ENCODE measurements at regions of chr6 and their contacts with region 1.

Region 1: DNA sequence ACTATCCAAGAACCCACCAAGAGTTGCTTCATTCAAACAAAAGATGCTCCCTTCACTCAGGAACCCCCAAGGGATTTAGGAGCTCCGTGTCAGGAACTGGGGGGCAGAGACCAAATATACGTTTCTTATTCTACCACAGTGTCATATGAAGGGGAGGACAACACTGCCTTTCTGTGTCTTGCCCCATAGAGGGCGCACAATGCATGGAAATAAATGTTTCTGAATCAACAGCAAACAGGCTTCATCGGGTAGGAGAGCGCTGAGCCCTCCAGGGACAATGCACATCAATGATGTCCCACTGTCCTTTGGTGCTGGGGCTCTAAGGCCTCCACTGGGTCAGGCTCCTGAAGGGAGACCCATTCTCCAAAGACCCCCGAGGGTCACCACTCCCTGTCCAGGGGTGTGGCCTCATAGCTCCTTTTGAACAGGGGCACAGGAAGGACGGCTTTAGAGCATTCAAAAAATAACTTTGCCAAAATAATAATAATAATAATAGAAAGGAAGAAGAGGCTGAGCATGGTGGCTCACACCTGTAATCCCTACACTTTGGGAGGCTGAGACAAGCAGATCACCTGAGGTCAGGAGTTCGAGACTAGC is 31.1 kb downstream of the PLG start:
- DNase-seq: no peak
- ATAC-seq: peak; percentile 78
- H3K4me3 Mint-ChIP-seq: no peak overlapping the region
- H3K27ac Mint-ChIP-seq: no peak overlapping the region
- H3K4me1 Mint-ChIP-seq: no peaks in the 10 kb centered on the region
- H3K27me3 Mint-ChIP-seq: peaks cover 25% of the 10 kb centered on the region
- CTCF ChIP-seq: no peak

Region 2: DNA sequence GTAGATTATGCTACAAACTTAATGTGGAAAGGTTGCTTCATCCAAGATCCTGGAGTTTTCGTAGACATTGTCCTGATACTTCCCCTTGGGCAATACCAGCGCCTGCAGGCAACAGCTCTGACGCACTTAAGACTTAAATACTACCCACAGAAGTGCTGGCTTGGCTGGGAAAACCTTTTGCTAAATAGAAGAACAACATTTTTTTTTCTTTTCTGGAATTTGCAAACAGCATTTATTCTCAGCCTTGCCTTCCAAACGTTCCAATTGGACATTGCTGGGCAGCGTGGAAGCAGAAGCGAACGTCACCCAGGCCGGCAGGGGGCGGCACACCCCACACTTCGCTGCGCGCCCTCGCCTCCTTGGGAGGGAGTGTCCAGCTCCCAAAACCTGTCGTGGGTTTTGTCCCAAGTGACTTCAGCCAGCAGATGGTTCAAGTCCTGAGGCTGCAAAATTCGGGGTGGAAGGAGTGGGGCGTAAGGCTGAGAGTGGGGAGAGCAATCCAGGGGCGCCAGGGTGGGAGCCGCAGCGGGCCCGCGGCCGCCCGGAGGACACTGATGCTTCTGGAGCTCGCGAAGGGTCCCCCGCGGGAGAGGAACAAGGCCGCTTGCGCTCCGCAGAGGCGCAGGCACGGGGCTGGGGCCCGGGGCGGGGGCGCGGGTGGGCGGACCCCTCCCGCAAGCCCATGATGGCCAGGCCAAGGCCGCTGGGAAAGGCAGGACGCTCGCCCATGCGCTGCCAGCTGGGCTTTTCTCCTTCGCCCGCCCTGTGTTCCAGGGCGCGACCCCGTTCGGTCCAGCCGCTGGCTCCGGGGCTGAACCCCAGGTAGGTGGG is 197.6 kb after region 1 on chr6:
- CTCF ChIA-PET with region 1: no interaction called
- POLR2A ChIA-PET with region 1: no interaction called
- intact Hi-C with region 1: loop called (anchors 2 kb)
- DNase-seq: peak; percentile 39
- ATAC-seq: no peak
- H3K4me3 Mint-ChIP-seq: no peak overlapping the region
- H3K27ac Mint-ChIP-seq: no peak overlapping the region
- H3K4me1 Mint-ChIP-seq: peaks cover 4% of the 10 kb centered on the region
- H3K27me3 Mint-ChIP-seq: peaks cover 33% of the 10 kb centered on the region
- CTCF ChIP-seq: no peak

Measured in activated B cell treated with CpG ODN at 0.5 μM for 24 hours (primary cell).